ENCODE measurements at regions of chr17 and their contacts with region 1.

Region 1: DNA sequence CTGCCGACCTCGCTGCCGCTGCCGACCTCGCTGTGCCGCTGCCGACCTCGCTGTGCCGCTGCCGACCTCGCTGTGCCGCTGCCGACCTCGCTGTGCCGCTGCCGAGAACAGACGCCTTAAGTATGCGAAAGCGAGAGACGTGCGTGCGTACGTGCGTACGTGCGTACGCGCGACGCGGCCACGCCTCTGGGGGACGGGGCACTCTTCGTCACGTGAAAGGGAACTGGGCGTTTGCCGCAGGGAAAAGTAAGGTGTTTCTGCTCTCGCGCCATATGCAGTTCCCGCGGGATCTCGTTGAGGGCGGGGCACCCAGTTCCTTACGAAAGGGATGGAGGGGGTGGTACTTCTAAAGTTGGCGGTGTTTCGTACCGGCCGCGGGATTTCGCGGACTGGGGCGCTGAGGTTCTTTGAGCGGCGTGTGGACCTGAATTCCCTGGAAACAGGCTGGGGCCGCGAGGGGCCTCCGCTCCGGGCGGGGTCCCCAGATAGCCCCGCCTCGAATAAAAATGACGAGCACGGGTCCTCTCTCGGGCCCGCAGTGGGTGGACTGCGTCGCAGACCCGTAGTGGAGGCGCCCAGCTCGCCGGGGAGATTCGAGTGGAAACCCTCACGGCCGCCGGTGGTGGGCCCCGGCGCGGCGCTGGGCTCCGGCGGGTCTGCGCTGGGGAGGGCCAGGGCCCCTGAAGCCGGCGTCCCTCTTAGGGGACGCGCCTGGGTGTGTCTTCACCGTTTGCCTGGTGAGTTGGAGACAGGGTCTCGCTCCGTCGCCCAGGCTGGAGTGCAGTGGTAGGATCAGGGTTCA is at the start of gene EIF4A3:
- DNase-seq: peak; percentile 95
- ATAC-seq: peak; percentile 88
- H3K4me3 Mint-ChIP-seq: peak within 1 kb of the TSS; percentile 98
- H3K27ac Mint-ChIP-seq: peak within 1 kb of the TSS; percentile 90
- H3K4me1 Mint-ChIP-seq: peaks cover 42% of the 10 kb centered on the region
- H3K27me3 Mint-ChIP-seq: no peaks in the 10 kb centered on the region
- CTCF ChIP-seq: no peak
- total RNA-seq, gene EIF4A3: 84.0 and 88.1 TPM in 2 replicates

Region 2: DNA sequence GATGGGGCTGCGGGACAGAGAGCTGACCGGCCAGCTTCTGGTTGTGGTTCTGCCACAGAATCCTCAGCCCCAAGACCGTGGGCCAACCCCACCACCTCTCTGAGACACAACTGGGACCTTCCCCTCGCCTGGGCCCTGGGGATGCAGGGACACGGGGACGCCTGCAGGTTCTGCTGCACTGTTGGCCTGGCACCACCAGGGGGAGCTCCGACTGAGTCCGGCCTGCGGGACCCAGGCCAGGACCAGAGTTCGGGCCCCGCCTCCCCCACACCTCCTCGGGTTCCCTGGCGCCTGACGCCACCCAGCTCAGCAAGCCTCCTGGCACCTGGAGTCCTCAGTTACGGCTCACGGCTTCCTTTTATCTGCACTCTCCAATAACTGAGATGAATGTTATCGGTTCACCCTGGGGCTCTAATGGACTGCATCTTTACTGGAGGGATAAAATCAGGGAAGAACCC is 138.8 kb before region 1 on chr17:
- CTCF ChIA-PET with region 1: no interaction called
- POLR2A ChIA-PET with region 1: no interaction called
- intact Hi-C with region 1: loop called (anchors 5 kb)
- DNase-seq: peak; percentile 77
- ATAC-seq: peak; percentile 94
- H3K4me3 Mint-ChIP-seq: no peak overlapping the region
- H3K27ac Mint-ChIP-seq: no peak overlapping the region
- H3K4me1 Mint-ChIP-seq: peaks cover 5% of the 10 kb centered on the region
- H3K27me3 Mint-ChIP-seq: no peaks in the 10 kb centered on the region
- CTCF ChIP-seq: peak; percentile 60

Region 3: DNA sequence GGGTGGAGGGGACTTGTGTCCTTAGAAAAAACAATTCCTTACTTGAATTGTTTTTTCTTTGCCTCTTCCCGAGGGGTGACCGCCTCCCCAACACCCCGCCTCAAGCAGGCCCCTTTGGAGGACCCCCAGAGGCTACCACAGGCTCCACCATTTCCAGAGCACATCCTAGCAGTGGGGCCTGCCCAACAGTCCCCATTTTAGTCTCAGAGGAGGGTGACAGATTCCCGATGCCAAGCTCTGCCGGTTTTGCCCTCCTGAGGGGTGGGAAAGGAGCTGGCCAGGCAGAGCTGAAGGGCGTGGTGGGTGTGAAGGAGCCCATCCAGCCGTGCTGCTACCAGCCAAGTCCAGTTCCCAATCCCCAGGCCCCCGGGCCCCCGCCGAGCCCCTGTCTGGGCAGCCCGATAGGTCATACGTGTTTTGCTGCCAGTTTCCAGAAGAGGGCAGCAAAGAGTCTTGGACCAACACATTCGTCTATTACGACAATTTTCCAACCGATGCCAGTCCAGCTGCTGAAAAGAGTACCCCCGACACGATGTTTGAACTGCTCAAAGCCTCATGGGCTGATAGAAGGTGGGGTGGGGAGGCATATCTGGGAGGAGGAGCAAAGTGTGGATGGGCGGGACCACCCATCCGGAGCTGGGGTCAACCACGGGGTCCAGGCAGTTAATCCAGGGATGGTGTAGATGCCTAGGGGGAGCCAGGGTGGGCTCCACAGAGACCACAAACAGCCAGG is 64.7 kb before region 1 on chr17:
- CTCF ChIA-PET with region 1: no interaction called
- POLR2A ChIA-PET with region 1: no interaction called
- intact Hi-C with region 1: loop called (anchors 5 kb)
- DNase-seq: peak; percentile 43
- ATAC-seq: peak; percentile 68
- H3K4me3 Mint-ChIP-seq: no peak overlapping the region
- H3K27ac Mint-ChIP-seq: no peak overlapping the region
- H3K4me1 Mint-ChIP-seq: peaks cover 2% of the 10 kb centered on the region
- H3K27me3 Mint-ChIP-seq: peaks cover 8% of the 10 kb centered on the region
- CTCF ChIP-seq: peak; percentile 79

Region 4: DNA sequence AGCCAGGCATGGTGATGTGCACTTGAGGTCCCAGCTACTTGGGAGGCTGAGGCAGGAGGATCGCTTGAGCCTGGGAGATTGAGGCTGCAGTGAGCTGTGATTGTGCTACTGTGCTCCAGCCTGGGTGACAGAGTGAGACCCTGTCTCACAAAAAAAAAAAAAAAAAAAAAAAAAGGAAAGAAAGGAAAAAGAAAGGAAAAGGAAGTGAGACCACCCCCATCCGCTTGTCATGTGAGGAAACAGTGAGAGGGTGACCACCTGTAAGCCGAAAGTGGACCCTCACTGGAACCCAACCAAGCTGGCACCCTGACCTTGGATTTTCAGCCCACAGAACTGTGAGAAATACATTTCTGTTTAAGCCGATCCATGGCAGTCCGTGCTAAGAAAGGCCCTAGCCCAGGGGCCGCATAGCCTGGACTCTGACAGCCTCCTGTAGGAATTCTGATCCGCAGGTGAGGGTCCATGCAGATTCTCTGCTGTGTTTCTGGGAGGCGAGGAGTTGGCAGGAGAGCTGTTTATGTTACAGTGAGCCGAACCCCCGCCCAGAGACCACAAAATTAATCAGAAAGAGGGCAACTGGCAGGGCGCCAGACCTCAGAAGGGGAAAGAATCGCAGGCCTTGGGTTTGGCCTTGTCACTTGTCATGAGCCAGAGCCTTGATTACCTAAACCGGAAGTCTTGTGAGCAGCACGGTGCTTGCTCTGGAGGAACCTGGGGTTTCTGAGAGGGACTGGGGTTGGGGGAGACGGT is 72.0 kb after region 1 on chr17:
- CTCF ChIA-PET with region 1: no interaction called
- POLR2A ChIA-PET with region 1: interaction called, 6 read pairs
- intact Hi-C with region 1: loop called (anchors 1 kb)
- DNase-seq: peak; percentile 75
- ATAC-seq: peak; percentile 89
- H3K4me3 Mint-ChIP-seq: peak overlapping the region; percentile 90
- H3K27ac Mint-ChIP-seq: peak overlapping the region; percentile 92
- H3K4me1 Mint-ChIP-seq: peaks cover 20% of the 10 kb centered on the region
- H3K27me3 Mint-ChIP-seq: no peaks in the 10 kb centered on the region
- CTCF ChIP-seq: no peak

Region 5: DNA sequence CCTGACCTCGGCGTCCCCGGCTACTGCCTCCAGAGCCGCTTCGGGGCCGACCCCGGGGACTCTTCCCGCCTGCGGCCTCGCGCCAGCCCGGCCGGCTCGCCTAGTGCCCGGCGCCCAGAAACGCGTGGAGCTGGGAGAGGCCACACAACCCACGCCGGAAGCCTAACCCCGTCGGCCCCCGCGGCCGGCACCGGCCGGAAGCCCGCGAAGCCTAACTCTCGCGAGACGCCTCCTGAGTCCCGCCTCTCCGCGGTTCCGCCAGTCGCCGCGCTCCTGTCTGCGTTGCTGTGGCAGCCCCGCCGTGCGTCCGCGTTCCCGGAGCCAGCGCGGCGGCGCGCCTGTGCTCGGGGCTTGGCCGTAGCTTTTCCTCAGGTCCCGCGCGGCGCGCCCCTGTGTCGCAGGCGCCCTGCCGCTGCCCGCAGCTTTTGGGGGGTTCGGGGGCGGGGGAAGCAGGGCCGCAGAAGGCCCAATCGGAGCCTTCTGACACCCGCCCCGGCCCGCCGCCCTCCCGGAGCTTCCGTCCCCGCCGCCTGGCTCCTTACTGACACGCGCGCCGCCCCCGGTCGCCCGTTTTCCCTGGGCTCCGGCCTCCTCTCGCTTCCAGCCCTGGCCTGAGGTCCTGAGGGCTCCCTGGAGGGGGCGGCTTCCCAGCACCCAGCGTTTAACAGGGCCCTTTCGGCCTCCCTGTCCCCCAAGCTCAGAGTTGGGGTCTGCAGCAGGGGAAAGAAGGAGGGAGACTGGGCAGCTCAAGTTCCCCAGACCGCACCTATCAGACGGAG is 307.5 kb after region 1 on chr17:
- CTCF ChIA-PET with region 1: no interaction called
- POLR2A ChIA-PET with region 1: interaction called, 14 read pairs
- intact Hi-C with region 1: loop called (anchors 1 kb)
- DNase-seq: peak; percentile 95
- ATAC-seq: peak; percentile 92
- H3K4me3 Mint-ChIP-seq: peak overlapping the region; percentile 92
- H3K27ac Mint-ChIP-seq: peak overlapping the region; percentile 92
- H3K4me1 Mint-ChIP-seq: peaks cover 15% of the 10 kb centered on the region
- H3K27me3 Mint-ChIP-seq: peaks cover 25% of the 10 kb centered on the region
- CTCF ChIP-seq: no peak